ENCODE measurements at regions of chr5 and their contacts with region 1.

Region 1: GRCh38 chr5:38441453-38442246 is 114.8 kb downstream of the LIFR start:
- DNase-seq: peak; percentile 89
- ATAC-seq: peak; percentile 99
- H3K4me3 Mint-ChIP-seq: no peak overlapping the region
- H3K27ac Mint-ChIP-seq: no peak overlapping the region
- H3K4me1 Mint-ChIP-seq: no peaks in the 10 kb centered on the region
- H3K27me3 Mint-ChIP-seq: peaks cover 34% of the 10 kb centered on the region

Region 2: DNA sequence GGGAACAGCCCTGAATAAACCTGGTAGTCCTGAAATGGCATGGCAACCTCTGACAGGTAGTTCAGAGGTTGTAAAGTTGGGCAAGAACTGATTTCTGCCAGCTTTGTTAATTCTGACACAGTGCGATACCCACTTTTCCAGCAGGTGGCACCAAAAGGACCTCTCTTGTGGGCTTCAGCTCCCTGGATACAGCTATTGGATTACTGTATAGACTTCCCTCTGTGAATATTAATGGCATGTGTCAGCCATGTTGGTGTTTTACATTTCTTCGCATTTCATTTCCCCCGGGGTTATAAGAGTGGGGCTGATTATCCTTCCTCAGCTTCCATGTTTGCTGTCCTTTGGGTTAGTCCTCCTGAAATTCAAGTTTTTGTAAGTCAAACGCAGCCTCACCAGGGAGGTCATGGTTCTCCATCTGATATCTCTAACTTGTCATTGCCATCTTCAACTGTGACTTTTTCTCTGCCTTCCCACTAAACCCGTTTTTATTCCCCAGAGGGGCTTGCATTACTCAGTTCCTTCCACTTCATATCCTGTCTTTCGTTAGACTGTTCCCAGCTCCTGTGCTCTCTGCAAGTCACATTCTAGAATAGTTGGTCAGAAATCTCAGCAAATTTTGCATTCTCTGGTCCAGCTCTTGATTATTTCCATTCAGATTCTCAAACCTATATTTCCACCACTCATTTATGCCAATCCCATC is 20.8 kb before region 1 on chr5:
- CTCF ChIA-PET with region 1: interaction called, 36 read pairs
- POLR2A ChIA-PET with region 1: no interaction called
- DNase-seq: peak; percentile 47
- ATAC-seq: no peak
- H3K4me3 Mint-ChIP-seq: no peak overlapping the region
- H3K27ac Mint-ChIP-seq: no peak overlapping the region
- H3K4me1 Mint-ChIP-seq: no peaks in the 10 kb centered on the region
- H3K27me3 Mint-ChIP-seq: peaks cover 26% of the 10 kb centered on the region

Region 3: DNA sequence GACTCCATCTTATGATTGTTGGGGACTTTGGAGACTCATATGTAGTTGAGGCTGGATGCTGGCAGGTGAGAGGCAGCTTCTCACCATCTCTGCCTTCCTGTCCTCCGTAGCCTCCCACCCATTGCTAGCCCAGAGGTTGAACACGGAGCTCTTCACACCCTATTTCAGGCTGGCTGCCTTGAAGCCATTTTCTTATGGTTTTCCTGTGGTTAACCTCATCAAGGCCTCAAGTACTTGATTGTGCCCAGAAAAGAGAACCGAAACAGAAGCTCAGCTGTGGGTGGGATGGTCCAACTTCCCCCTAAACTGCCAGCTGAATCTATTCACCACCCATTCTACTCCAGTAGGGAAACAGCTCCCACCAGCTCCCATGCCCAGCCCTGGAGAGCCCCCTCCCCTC is 11.9 kb after region 1 on chr5:
- CTCF ChIA-PET with region 1: interaction called, 68 read pairs
- POLR2A ChIA-PET with region 1: interaction called, 3 read pairs
- DNase-seq: peak; percentile 83
- ATAC-seq: peak; percentile 98
- H3K4me3 Mint-ChIP-seq: peak overlapping the region; percentile 45
- H3K27ac Mint-ChIP-seq: peak overlapping the region; percentile 50
- H3K4me1 Mint-ChIP-seq: peaks cover 21% of the 10 kb centered on the region
- H3K27me3 Mint-ChIP-seq: peaks cover 81% of the 10 kb centered on the region

Region 4: GRCh38 chr5:38540314-38540713 is 98.7 kb after region 1 on chr5:
- CTCF ChIA-PET with region 1: interaction called, 15 read pairs
- POLR2A ChIA-PET with region 1: no interaction called
- DNase-seq: no peak
- ATAC-seq: no peak
- H3K4me3 Mint-ChIP-seq: no peak overlapping the region
- H3K27ac Mint-ChIP-seq: no peak overlapping the region
- H3K4me1 Mint-ChIP-seq: no peaks in the 10 kb centered on the region
- H3K27me3 Mint-ChIP-seq: peaks cover 22% of the 10 kb centered on the region

Region 5: DNA sequence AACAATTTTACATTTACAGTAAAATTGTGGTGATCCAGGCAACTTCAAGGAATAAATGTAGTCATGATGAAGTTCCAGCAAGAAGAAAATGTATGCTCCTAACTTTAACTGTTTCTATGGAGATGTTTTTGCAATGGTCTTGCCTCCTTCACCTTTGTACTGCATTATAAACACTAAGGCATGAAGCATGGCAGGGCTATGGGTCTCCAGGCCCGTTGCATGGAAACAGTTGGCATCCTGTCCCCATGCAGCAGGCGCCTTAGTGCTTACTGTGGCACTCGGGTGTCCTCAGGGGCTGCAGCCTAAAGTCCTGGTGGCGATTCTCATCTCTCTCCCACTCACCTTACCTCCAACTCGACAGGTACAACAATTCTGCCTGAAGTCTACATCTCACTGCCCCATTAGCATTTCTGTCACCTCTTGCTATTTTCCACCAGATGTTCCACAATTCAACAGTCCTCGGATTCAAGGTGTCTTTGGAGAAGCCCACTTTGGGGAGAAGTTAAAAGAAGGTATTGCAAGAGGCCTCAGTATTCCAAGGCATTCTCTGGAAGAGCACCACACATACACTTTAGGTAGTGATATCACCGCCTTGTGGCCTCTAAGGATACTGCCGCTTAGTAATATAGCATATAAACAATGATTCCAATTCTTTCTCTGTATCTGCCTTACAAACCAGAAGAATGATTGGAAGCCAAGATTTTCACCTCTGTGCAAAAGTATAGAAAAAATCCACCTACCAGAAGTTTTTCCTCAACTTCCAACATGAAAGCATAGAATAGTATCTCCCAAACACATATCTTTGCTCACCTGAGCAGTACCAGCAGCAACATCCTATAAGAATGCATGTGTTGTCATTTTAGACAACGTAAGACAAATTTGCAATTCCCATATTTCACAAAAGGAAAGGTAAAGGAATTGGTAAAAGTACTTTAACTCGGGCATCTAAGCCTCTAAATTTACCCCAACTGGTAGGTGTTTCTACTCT is 109.7 kb after region 1 on chr5:
- CTCF ChIA-PET with region 1: interaction called, 29 read pairs
- POLR2A ChIA-PET with region 1: interaction called, 3 read pairs
- DNase-seq: no peak
- ATAC-seq: no peak
- H3K4me3 Mint-ChIP-seq: no peak overlapping the region
- H3K27ac Mint-ChIP-seq: no peak overlapping the region
- H3K4me1 Mint-ChIP-seq: peaks cover 3% of the 10 kb centered on the region
- H3K27me3 Mint-ChIP-seq: peaks cover 46% of the 10 kb centered on the region

Region 6: DNA sequence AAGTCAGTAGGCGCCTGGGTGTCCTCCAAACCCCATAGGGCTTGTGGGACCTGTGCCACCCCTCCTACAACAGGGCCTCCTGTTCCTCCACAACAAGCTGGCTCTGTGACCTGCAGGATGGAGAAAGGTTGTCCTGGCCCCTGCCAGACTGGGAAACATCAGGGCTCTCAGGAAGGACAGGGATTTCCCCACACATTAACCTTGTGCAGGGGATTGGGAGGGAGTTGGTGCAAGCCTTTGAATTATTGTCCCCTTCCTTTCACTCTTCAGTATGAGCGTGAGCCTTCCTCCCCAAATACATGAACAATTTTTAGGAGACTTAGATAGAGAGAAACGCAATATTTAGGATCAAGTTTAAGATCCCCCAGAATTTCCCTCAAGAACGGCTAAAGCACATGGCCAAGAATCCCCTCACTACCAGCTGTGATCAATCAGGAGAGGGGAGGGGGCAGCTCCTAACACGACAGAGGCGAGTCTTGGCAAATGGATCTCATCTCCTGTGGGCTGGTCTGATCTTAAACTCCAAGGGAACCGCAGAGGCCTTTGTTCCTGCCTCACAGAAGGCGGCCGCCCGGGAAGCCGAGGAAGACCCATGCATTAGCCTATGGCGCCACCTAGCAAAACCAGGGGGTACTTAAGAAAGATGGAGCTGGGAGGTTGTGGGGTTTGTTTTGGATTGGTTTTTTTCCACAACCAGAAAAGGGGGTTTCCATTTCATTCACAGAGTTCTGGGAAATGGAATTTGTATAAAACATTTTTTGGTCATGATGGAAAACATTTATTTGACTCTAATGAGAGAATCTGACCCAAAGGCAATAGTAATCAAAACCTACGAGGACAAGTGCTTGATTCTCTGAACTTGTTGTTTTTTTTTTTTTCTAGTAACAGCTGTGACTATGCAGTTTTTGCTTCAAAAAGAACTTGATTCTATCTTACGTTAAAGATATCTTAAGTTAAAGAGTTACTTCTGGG is 368.0 kb after region 1 on chr5:
- CTCF ChIA-PET with region 1: interaction called, 85 read pairs
- POLR2A ChIA-PET with region 1: no interaction called
- DNase-seq: peak; percentile 63
- ATAC-seq: peak; percentile 65
- H3K4me3 Mint-ChIP-seq: no peak overlapping the region
- H3K27ac Mint-ChIP-seq: no peak overlapping the region
- H3K4me1 Mint-ChIP-seq: no peaks in the 10 kb centered on the region
- H3K27me3 Mint-ChIP-seq: peaks cover 10% of the 10 kb centered on the region

Region 7: GRCh38 chr5:38922199-38922598 is 480.5 kb after region 1 on chr5:
- CTCF ChIA-PET with region 1: interaction called, 14 read pairs
- POLR2A ChIA-PET with region 1: no interaction called
- DNase-seq: peak; percentile 58
- ATAC-seq: peak; percentile 67
- H3K4me3 Mint-ChIP-seq: no peak overlapping the region
- H3K27ac Mint-ChIP-seq: no peak overlapping the region
- H3K4me1 Mint-ChIP-seq: no peaks in the 10 kb centered on the region
- H3K27me3 Mint-ChIP-seq: peaks cover 28% of the 10 kb centered on the region

Measured in activated CD8-positive, alpha-beta T cell treated with anti-CD3 and anti-CD28 coated beads, Interleukin-2, amount 10 ng/mL, durations not matched to agents 7 days and 5 days (primary cell).